Activated CD4-positive, alpha-beta T cell treated with anti-CD3 and anti-CD28 coated beads for 36 hours (primary cell): ENCODE measurements at regions of chr5 and their contacts with region 1.

Region 1: DNA sequence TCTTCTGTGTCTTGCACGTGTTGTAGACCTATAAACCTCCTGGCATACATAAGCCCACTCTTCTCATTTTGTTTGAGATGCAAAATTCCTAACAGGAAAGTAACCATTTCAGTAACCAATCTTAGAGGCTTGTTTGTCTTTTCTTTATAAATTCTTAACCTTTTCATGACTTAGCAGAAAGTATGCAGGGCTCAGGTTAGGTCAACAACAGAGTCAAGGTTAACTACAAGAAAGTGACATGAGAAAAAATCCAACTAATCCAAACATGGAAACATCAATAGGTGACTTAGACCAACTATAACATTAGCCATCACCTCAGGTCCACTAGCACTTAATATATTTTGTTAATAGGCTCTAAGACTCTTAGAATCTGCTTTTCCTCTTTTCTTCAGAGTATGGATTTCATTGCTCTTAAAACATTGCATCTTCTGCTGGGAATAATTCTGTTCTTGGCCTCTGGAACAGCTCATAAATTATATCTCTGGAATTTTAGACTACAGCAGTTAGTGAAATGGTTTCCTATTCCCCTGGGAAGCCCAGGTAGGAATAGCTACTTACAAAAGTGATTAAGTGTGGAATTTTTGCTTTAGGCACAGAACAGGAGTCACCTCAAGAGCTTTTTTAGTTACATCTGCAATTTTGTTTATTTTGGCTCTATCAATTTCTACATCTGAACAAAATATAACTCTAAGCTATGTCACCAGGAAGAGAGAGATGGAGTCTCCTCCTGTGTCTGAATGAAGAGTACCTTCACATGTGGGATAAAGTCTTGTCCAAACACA is 155.3 kb upstream of the ANKRD55 start:
- DNase-seq: no peak
- ATAC-seq: no peak
- H3K4me3 Mint-ChIP-seq: no peak overlapping the region
- H3K27ac Mint-ChIP-seq: no peak overlapping the region
- H3K4me1 Mint-ChIP-seq: peaks cover 3% of the 10 kb centered on the region
- H3K27me3 Mint-ChIP-seq: no peaks in the 10 kb centered on the region

Region 2: DNA sequence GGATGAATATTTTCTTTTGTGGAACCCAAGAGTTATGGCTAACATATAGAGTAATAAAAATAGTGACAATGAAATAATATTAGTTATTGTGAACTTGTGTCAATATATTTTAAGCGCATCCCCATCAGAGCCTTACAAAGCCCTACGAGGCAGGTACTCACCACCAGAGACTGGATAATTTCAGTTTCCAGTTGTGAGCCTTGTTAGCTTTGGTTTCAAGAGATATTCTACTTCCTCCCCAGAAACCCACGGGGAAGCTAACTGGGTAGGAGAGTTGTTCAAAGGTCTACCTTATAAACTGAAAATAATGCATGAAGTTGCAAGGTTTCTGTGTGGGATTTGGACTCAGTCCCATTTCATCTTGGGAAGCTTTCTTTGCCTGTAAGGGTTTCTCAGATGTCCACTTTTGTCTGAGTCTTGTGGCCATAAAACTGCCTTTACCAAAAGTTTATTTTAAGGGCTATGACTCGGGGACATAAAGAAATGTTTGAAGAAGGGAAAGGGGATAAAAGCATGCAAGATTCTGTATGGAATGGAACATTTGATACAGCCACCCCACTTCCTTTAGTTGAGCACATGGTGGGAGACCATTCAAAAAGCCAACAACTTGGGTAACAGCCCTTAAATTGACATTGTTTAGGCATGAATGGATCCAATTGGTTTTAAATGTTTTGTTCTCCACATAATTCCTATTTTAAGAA is 97.9 kb before region 1 on chr5:
- CTCF ChIA-PET with region 1: no interaction called
- POLR2A ChIA-PET with region 1: no interaction called
- intact Hi-C with region 1: loop called in 1 of 2 experiments (anchors 5 kb)
- DNase-seq: no peak
- ATAC-seq: no peak
- H3K4me3 Mint-ChIP-seq: no peak overlapping the region
- H3K27ac Mint-ChIP-seq: no peak overlapping the region
- H3K4me1 Mint-ChIP-seq: peaks cover 9% of the 10 kb centered on the region
- H3K27me3 Mint-ChIP-seq: no peaks in the 10 kb centered on the region

Region 3: GRCh38 chr5:56350598-56351170 is 37.7 kb before region 1 on chr5:
- CTCF ChIA-PET with region 1: no interaction called
- POLR2A ChIA-PET with region 1: no interaction called
- intact Hi-C with region 1: no loop called
- DNase-seq: no peak
- ATAC-seq: peak; percentile 17
- H3K4me3 Mint-ChIP-seq: no peak overlapping the region
- H3K27ac Mint-ChIP-seq: no peak overlapping the region
- H3K4me1 Mint-ChIP-seq: peaks cover 41% of the 10 kb centered on the region
- H3K27me3 Mint-ChIP-seq: no peaks in the 10 kb centered on the region

Region 4: GRCh38 chr5:56552612-56553268 is 164.3 kb after region 1 on chr5:
- CTCF ChIA-PET with region 1: no interaction called
- POLR2A ChIA-PET with region 1: no interaction called
- intact Hi-C with region 1: no loop called
- DNase-seq: no peak
- ATAC-seq: no peak
- H3K4me3 Mint-ChIP-seq: no peak overlapping the region
- H3K27ac Mint-ChIP-seq: no peak overlapping the region
- H3K4me1 Mint-ChIP-seq: peaks cover 2% of the 10 kb centered on the region
- H3K27me3 Mint-ChIP-seq: no peaks in the 10 kb centered on the region

Region 5: DNA sequence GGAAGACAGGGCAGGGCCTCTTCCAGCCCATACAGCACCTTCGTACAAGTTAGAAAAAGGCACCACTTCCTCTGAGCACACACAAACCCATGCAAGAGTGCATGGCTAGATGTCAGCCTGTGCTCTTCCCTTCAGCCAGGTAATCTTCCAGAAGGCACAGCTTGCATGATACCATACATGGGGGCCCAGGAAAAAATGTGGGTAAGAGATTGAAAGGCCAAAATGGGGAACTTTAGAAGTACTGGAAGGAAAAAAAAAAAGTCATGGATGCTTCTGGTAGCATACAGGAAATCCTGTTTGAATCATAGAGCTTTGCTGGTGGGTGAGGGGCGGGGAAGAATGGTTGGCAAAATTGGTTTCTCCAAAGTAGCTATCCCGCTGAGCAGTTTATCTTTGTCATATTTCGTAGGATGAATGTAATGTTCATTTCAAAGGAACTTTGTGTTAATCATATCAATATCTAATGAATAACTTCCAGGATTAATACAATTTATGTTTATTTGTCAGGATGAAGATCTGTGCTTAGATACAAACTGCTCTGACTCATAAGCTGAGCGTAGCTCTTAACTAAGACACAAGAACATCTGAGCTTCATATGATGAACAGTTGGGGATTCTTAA is 348.7 kb after region 1 on chr5:
- CTCF ChIA-PET with region 1: no interaction called
- POLR2A ChIA-PET with region 1: no interaction called
- intact Hi-C with region 1: no loop called
- DNase-seq: peak; percentile 33
- ATAC-seq: peak; percentile 47
- H3K4me3 Mint-ChIP-seq: no peak overlapping the region
- H3K27ac Mint-ChIP-seq: peak overlapping the region; percentile 81
- H3K4me1 Mint-ChIP-seq: peaks cover 35% of the 10 kb centered on the region
- H3K27me3 Mint-ChIP-seq: no peaks in the 10 kb centered on the region